ENCODE measurements at regions of chr18 and their contacts with region 1.

Region 1: GRCh38 chr18:2932247-2933181 is 80.4 kb downstream of the LPIN2 start:
- DNase-seq: peak in 1 of 2 donors; percentile 66
- ATAC-seq: peak in 5 of 8 donors; percentile 34 to 62 (median 56)
- H3K4me3 ChIP-seq: no peak overlapping the region
- H3K27ac ChIP-seq: no peak overlapping the region
- H3K4me1 ChIP-seq: peaks cover 0 to 4% (median 0%) of the 10 kb centered on the region in 9 donors
- H3K27me3 ChIP-seq: no peaks in the 10 kb centered on the region
- CTCF ChIP-seq: peak; percentile 60 to 87 (median 77)

Region 2: DNA sequence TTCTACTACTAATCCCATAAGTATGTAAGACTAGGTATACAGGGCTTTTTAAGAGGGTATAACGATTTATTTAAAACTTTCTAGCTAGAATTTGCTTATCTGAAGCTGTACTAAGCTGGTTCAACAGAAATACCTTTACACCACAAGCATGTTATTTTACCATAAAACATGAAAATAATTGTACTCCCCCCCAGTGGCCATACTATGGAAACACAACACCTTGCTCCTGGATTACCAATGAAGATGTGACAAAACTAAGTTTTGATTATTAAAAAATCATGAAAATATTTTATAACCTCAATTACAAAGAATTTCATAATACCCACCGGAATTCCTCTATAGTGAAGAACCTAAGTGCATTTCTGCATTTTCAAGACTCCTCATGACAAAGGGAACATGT is 53.1 kb after region 1 on chr18:
- intact Hi-C with region 1: loop called in 6 of 10 experiments (anchors 1 to 10 kb)
- DNase-seq: no peak
- ATAC-seq: no peak
- H3K4me3 ChIP-seq: no peak overlapping the region
- H3K27ac ChIP-seq: peak overlapping the region in 1 of 10 donors; percentile 3
- H3K4me1 ChIP-seq: peaks cover 0 to 63% (median 27%) of the 10 kb centered on the region in 9 donors
- H3K27me3 ChIP-seq: no peaks in the 10 kb centered on the region
- CTCF ChIP-seq: peak; percentile 20 to 64 (median 47)

Region 3: DNA sequence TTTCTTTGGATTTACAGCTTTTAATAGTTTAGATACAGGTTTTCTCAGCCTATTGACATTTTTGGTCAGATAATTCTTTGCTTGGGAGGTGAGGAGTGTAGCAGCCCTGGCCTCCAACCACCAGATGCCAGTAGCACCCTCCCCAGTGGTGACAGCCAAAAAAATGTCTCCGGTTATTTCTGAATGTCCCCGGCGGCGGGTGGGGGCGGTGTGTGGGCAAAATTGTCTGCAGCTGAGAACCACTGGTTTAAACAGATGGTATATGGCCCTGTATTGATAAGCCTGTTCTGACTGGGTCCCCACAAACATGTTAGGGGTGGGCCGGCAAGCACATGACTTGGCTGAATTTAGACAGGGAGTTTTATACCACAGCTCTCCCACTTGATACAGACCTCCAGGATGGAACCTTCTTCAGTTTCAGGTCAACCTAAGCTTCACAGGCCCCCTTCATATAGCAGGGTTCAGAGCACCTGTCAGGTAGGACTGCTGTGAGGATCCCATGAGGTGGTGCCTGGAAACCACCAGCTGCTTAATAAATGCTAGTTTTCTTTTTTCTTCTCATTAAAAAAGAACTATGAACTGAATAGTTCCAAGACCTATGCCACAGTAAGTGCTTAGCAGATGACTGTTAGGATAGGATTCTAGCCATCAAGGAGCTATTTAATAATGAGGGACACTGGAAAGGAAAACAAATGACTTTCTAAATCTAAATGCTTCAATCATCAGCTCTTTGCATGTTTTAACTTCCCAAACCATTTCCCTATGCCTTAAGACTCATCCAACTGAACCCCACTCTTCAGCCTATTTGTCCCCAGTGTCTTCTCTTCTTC is 62.3 kb after region 1 on chr18:
- intact Hi-C with region 1: loop called in 1 of 10 experiments (anchors 5 kb)
- DNase-seq: peak in 1 of 2 donors; percentile 39
- ATAC-seq: peak; percentile 32 to 87 (median 66)
- H3K4me3 ChIP-seq: no peak overlapping the region
- H3K27ac ChIP-seq: peak overlapping the region in 1 of 10 donors; percentile 24
- H3K4me1 ChIP-seq: peaks cover 2 to 52% (median 31%) of the 10 kb centered on the region in 9 donors
- H3K27me3 ChIP-seq: no peaks in the 10 kb centered on the region
- CTCF ChIP-seq: peak; percentile 23 to 61 (median 42)

Region 4: DNA sequence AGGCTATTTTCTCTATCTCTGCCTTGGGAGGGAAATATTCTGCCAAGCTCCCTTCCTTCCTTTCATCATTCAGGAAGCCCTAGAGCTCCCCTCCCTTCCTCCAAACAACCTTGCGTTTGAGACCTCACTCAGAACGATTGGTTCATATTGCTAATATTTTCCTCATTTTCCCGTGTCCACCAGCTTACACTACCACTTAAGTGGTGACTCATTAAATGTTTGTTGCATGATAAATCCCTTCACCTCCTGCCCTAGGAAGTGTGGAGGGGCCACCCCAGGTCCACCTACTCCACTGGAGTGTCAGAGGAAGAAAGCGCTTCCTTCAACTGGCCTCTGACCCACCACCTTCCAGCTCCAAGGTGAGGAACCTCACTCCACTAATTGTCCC is 82.7 kb after region 1 on chr18:
- intact Hi-C with region 1: no loop called
- DNase-seq: no peak
- ATAC-seq: peak in 2 of 8 donors; percentile 5 to 9
- H3K4me3 ChIP-seq: no peak overlapping the region
- H3K27ac ChIP-seq: peak overlapping the region in 9 of 10 donors; percentile 2 to 93 (median 68)
- H3K4me1 ChIP-seq: peaks cover 3 to 71% (median 39%) of the 10 kb centered on the region in 9 donors
- H3K27me3 ChIP-seq: no peaks in the 10 kb centered on the region
- CTCF ChIP-seq: no peak

Region 5: GRCh38 chr18:3051718-3052410 is 119.3 kb after region 1 on chr18:
- intact Hi-C with region 1: no loop called
- DNase-seq: no peak
- ATAC-seq: peak in 1 of 8 donors; percentile 22
- H3K4me3 ChIP-seq: no peak overlapping the region
- H3K27ac ChIP-seq: no peak overlapping the region
- H3K4me1 ChIP-seq: peaks cover 0 to 8% (median 0%) of the 10 kb centered on the region in 9 donors
- H3K27me3 ChIP-seq: no peaks in the 10 kb centered on the region
- CTCF ChIP-seq: no peak

Region 6: GRCh38 chr18:3129053-3129864 is 196.7 kb after region 1 on chr18:
- intact Hi-C with region 1: loop called in 7 of 10 experiments (anchors 2 to 10 kb)
- DNase-seq: peak; percentile 78 to 82
- ATAC-seq: peak; percentile 76 to 93 (median 85)
- H3K4me3 ChIP-seq: no peak overlapping the region
- H3K27ac ChIP-seq: peak overlapping the region in 1 of 10 donors; percentile 2
- H3K4me1 ChIP-seq: peaks cover 0 to 17% (median 7%) of the 10 kb centered on the region in 9 donors
- H3K27me3 ChIP-seq: no peaks in the 10 kb centered on the region
- CTCF ChIP-seq: peak; percentile 57 to 91 (median 82)

Region 7: GRCh38 chr18:3209859-3210569 is 277.5 kb after region 1 on chr18:
- intact Hi-C with region 1: no loop called
- DNase-seq: no peak
- ATAC-seq: peak in 1 of 8 donors; percentile 27
- H3K4me3 ChIP-seq: peak overlapping the region in 5 of 10 donors; percentile 8 to 65 (median 17)
- H3K27ac ChIP-seq: peak overlapping the region in 9 of 10 donors; percentile 18 to 96 (median 95)
- H3K4me1 ChIP-seq: peaks cover 3 to 67% (median 40%) of the 10 kb centered on the region in 9 donors
- H3K27me3 ChIP-seq: no peaks in the 10 kb centered on the region
- CTCF ChIP-seq: no peak